CD14-positive monocyte (primary cell): ENCODE measurements at regions of chr3 and their contacts with region 1.

Region 1: DNA sequence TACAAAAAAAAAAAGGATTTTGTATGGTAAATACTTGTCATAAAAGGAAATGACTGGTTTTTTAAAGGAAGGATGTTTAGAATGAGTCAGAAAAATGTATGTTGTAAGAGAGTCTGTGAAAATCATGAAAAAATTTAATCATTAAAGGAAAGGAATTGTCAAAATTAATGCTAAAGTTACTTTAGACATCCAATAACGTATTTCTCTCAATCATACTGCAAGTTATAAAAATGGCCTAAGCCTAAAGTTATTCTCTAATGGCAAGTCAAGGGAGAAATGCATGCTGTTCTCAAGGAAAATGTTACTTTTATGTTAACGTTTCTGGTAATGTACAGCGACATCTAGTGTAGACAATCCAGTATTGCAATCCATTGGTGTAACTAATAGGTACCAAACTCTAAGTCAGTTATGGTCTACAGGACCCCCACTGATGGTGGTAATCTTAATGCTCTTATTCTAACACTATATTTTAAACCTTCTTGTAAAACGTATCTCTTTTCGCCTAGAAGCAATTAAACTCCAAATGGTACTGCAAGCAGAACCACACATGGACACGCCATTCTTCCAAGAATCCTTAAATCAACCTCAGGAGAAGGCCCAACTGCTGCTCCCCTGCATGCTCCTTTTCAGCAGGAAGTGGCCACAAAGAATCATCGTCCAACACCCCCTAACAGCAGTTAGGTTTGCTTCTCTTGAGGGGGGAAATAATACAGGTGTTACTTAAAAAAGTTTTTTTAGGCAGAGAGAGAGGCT is 35.2 kb downstream of the NCEH1 start:
- DNase-seq: peak; percentile 36 to 71 (median 52)
- H3K4me3 ChIP-seq: peak overlapping the region in 1 of 3 experiments; percentile 57
- H3K4me3 Mint-ChIP-seq: no peak overlapping the region
- H3K27ac ChIP-seq: peak overlapping the region in 1 of 2 donors; percentile 85
- H3K27ac Mint-ChIP-seq: peak overlapping the region; percentile 76 to 94 (median 91)
- H3K4me1 ChIP-seq: peaks cover 38 to 46% of the 10 kb centered on the region in 2 donors
- H3K4me1 Mint-ChIP-seq: peaks cover 30% of the 10 kb centered on the region
- H3K27me3 ChIP-seq: no peaks in the 10 kb centered on the region
- H3K27me3 Mint-ChIP-seq: peaks cover 0 to 2% (median 0%) of the 10 kb centered on the region in 3 donors
- CTCF ChIP-seq: peak; percentile 100

Region 2: DNA sequence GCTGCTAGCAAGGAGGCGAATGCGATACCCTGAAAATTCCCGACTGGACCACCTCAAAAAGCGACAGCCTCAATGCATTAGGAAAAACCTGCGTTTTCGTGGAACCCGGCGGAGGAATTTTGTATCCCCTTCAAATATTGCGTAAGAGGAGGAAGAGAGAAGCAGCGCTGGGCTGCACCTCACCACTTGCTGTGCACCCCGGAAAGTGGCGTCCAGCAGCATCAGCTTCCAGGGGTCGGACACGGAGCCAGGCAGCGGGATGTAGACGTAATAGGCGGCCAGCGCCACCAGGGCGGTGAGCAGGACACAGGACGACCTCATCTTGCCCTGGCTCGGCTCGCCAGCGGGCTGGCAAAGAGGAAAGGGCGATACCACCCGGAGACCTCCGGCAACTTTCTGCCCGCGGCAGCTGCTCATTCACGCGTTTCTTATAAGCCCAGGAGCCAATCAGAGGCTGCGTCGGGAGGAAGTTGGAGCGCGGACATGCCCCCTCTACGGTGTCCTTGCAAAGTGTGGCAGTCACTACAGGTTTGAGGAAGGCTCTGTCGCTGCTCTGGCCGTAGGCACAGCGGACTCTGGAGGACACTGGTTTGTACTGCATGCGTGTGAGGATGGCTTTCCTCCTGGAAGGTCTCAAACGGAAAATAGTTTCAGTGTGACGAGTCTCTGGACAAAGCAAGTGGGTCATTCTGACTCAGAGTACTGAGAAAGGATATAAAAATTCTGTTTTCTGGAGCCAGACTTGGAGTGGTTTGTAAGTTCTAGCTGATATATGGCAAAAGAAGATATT is 35.2 kb after region 1 on chr3 and contains the start of gene NCEH1:
- intact Hi-C with region 1: loop called (anchors 2 to 5 kb)
- DNase-seq: peak; percentile 93 to 99 (median 97)
- H3K4me3 ChIP-seq: peak within 1 kb of the TSS; percentile 89 to 90 (median 90)
- H3K4me3 Mint-ChIP-seq: peak within 1 kb of the TSS; percentile 97 to 98
- H3K27ac ChIP-seq: peak within 1 kb of the TSS; percentile 94 to 95
- H3K27ac Mint-ChIP-seq: peak within 1 kb of the TSS; percentile 95 to 98 (median 97)
- H3K4me1 ChIP-seq: peaks cover 37 to 44% of the 10 kb centered on the region in 2 donors
- H3K4me1 Mint-ChIP-seq: peaks cover 39% of the 10 kb centered on the region
- H3K27me3 ChIP-seq: no peaks in the 10 kb centered on the region
- H3K27me3 Mint-ChIP-seq: no peaks in the 10 kb centered on the region
- CTCF ChIP-seq: peak; percentile 94
- polyA plus RNA-seq, gene NCEH1: 8.6 to 23.9 (median 20.7) TPM

Region 3: DNA sequence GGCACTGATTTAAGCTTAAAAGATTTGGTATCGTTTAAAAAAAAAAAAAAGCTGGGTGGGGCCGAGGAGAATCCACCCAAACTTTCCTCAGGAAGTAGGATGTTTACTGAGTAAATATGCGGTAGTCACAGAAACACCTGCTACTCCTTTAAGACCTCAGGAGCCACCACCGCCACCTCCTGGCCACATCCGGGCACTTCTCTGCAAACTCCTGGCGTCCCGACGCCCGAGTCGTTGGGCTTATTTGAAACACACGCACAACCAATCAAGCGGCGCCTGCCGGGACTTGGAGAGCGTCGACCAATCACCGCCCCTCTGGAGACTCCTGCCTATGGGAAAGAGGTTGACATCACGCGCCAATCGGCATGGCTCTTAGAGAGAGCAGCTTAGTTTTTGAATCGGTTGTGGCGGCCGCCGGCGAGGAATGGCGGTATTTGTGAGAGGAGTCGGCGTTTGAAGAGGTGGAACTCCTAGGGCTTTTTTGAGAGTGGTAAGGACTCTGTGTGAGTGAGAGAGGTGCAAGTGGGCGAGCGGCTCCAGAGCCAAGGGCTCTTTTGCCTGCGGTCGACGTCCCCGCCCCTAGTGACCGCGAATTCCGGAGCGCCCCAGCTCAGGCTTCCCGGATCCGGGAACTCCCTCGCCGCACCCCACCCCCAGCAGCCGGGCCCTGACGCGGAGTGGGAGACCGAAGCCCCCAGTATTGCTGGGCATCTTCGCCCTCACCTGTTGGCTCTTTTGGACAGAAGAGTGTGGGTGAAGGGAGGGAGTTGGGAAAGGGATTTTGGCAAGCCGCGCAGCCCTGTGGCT is 75.0 kb after region 1 on chr3 and contains the start of gene ECT2:
- intact Hi-C with region 1: loop called in 1 of 2 experiments (anchors 5 kb)
- DNase-seq: peak; percentile 99
- H3K4me3 ChIP-seq: peak within 1 kb of the TSS; percentile 63 to 99 (median 83)
- H3K4me3 Mint-ChIP-seq: peak within 1 kb of the TSS; percentile 98 to 99
- H3K27ac ChIP-seq: peak within 1 kb of the TSS; percentile 48 to 85
- H3K27ac Mint-ChIP-seq: peak within 1 kb of the TSS; percentile 85 to 98 (median 95)
- H3K4me1 ChIP-seq: peaks cover 13 to 24% of the 10 kb centered on the region in 2 donors
- H3K4me1 Mint-ChIP-seq: peaks cover 25% of the 10 kb centered on the region
- H3K27me3 ChIP-seq: no peaks in the 10 kb centered on the region
- H3K27me3 Mint-ChIP-seq: peaks cover 0 to 1% (median 0%) of the 10 kb centered on the region in 3 donors
- CTCF ChIP-seq: peak; percentile 79
- polyA plus RNA-seq, gene ECT2: 2.6 to 3.3 (median 2.7) TPM